Gastrocnemius medialis (tissue), 4 donors: ENCODE measurements at regions of chr4 and their contacts with region 1.

Region 1: DNA sequence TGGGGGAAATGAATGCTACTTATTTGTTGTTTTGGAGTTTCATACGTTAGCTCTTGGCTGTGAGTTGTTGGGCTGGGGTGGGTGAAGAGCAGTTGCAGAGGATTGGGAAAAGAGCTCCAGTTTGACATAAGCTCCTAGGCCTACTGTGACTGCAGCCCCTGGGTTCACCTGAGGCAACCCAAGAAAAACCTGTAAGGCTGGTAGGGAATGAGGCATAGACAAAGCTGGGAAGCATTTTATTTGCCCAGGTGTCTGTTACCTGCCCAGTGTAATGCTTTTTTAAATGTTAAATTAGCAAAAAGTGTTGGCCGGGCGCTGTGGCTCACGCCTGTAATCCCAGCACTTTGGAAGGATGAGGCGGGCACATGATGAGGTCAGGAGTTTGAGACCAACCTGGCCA is 160.0 kb downstream of the FHIP1A start:
- DNase-seq: no peak
- ATAC-seq: no peak
- H3K4me3 ChIP-seq: no peak overlapping the region
- H3K27ac ChIP-seq: no peak overlapping the region
- H3K4me1 ChIP-seq: peaks cover 13 to 30% of the 10 kb centered on the region in 2 donors
- H3K27me3 ChIP-seq: no peaks in the 10 kb centered on the region
- CTCF ChIP-seq: no peak
- POLR2A ChIP-seq: no peak

Region 2: DNA sequence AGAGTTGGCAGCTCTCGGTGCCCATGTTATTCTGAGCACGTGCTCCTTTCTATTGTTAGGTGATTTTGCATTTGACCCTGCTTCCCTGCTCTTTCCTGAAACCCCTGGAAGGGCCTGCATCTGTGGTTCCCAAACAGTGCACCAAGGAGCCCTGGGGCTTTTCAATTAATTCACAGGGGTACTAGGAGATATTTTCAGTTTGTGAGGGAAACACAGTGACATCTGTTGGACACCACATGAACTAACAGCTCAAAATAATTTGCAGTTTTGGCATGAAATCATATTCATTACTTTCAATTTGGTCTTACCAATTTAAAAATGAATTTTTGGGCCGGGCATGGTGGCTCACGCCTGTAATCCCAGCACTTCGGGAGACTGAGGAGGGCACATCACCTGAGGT is 35.3 kb after region 1 on chr4:
- in situ Hi-C with region 1: no loop called
- intact Hi-C with region 1: loop called (anchors 1 kb)
- DNase-seq: no peak
- ATAC-seq: peak in 1 of 2 donors; percentile 46
- H3K4me3 ChIP-seq: no peak overlapping the region
- H3K27ac ChIP-seq: peak overlapping the region in 1 of 4 donors; percentile 27
- H3K4me1 ChIP-seq: peaks cover 0 to 8% of the 10 kb centered on the region in 2 donors
- H3K27me3 ChIP-seq: no peaks in the 10 kb centered on the region
- CTCF ChIP-seq: peak in 3 of 5 experiments; percentile 15 to 36 (median 23)
- POLR2A ChIP-seq: no peak

Region 3: DNA sequence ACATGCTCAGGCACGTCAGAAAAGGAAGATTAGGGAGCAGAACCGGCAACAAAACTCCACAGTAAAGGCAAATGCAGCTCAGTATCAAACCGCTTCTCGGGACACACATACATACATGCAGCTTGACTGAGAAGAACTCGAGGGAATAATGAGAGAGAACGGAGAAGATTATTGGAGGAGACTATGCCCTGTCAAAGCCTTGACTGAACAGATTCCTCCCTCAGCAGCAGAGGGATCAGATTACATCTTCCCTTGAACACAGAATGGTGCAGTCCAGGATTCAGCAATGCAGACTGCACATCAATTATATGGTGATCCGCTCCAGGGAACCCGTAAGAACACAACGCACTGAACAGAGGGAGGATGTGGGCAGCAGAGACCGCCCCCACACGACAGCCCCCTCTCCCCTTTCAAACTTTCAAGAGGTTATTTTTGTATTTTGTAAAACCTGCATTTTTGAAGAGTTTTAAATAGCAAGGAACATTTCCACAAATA is 783.7 kb after region 1 on chr4:
- in situ Hi-C with region 1: no loop called
- intact Hi-C with region 1: no loop called
- DNase-seq: peak; percentile 58 to 61
- ATAC-seq: peak; percentile 100
- H3K4me3 ChIP-seq: peak overlapping the region; percentile 30 to 59 (median 52)
- H3K27ac ChIP-seq: peak overlapping the region; percentile 68 to 77 (median 73)
- H3K4me1 ChIP-seq: peaks cover 21 to 33% of the 10 kb centered on the region in 2 donors
- H3K27me3 ChIP-seq: no peaks in the 10 kb centered on the region
- CTCF ChIP-seq: no peak
- POLR2A ChIP-seq: peak in 1 of 2 donors; percentile 47